Esophagus muscularis mucosa (tissue), 4 donors: ENCODE measurements at regions of chr19 and their contacts with region 1.

Region 1: DNA sequence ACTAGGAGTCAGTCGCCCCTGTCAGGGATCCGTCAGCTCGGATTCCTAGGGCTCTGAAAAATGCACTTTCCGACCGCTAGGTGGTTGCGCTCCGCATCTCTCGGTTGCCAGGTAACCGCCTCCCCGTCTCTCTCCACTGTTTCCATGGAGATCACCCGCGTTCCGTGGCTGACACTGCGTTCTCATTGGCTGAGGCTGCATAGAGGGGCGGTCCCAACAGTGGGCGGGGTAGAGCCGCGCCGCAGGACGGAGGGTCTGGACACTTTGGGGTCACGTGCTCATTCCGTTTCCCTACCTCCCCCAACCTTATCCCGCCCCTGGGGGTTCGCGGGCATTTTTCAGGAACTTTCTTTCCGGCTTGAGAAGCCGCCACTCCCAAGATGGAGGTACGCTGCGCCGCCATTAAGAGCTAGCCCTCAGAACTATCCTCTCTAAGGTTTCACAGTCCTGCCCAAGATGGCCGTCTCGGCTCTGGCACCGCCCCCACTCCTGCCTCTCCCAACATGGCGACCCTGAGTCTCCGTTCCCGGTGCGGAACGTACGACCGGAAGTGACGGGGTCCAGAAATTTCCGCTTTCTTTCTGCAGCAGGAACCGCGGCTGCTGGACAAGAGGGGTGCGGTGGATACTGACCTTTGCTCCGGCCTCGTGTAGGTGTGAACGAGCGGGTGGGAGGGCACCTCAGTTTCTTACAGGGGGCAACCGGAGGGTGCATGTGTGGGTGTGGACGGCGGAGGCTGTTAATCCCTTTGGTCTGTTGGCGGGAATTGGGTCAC is at the starts of genes ODAD3 and PRKCSH:
- DNase-seq: peak; percentile 99
- H3K4me3 ChIP-seq: peak within 1 kb of the TSS; percentile 70 to 90 (median 76)
- H3K27ac ChIP-seq: peak within 1 kb of the TSS; percentile 74 to 84 (median 80)
- H3K4me1 ChIP-seq: peaks cover 17 to 27% (median 20%) of the 10 kb centered on the region in 4 donors
- H3K27me3 ChIP-seq: no peaks in the 10 kb centered on the region
- CTCF ChIP-seq: peak; percentile 72 to 94 (median 94)
- EP300 ChIP-seq: no peak
- POLR2A ChIP-seq: no peak
- total RNA-seq, gene ODAD3: 0.39 to 0.83 TPM in 2 of 4 donors, not detected in the others
- total RNA-seq, gene PRKCSH: 81.0 to 141 (median 98.7) TPM

Region 2: GRCh38 chr19:11367528-11367927 is 67.7 kb before region 1 on chr19:
- intact Hi-C with region 1: no loop called
- DNase-seq: no peak
- H3K4me3 ChIP-seq: no peak overlapping the region
- H3K27ac ChIP-seq: no peak overlapping the region
- H3K4me1 ChIP-seq: peaks cover 0 to 10% (median 0%) of the 10 kb centered on the region in 4 donors
- H3K27me3 ChIP-seq: no peaks in the 10 kb centered on the region
- CTCF ChIP-seq: no peak
- EP300 ChIP-seq: no peak
- POLR2A ChIP-seq: no peak

Region 3: DNA sequence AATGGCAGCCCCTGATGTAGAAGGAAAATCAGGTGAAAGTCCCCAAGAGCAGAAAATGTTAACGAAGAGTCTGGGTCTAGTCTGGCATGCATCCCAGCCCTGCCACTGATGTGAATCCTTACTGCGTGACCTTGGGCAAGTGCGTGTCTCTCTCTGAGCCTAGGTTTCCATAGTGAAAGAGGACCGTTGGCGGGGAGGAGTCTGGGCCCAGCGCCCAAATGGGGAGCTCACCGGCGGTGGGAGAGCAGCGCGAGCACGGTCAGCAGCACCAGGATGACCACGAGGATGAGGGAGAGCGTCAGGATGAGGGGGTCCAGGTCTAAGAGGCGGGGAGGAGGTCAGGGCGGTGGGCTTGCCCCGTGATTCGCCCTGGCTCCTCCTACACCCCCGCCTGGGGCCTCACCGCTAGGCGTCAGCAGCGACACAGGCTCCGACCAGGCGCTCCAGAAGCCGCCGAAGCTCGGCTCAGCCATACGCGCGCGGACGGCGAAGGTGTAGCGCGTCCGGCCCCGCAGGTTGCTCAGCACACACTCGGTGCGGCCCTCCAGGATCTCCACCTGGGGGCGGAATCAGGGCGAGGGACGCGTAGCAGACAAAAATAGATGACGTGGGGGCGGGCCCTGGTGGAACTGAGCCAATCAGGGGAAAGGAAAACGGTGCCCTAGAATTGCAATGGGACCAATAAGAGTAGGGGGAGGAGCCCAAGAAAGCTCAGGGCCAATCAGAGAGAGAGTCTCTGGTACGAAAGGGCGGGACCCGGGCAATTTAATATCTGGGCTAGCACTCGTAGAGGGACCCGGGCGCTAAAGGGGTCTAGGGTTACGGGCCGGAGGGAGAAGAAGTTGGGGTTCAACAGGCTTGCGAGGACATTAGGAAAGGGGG is 54.4 kb before region 1 on chr19:
- intact Hi-C with region 1: loop called (anchors 5 kb)
- DNase-seq: peak; percentile 99
- H3K4me3 ChIP-seq: peak overlapping the region; percentile 60 to 78 (median 64)
- H3K27ac ChIP-seq: peak overlapping the region; percentile 79 to 86 (median 82)
- H3K4me1 ChIP-seq: peaks cover 46 to 71% (median 68%) of the 10 kb centered on the region in 4 donors
- H3K27me3 ChIP-seq: peaks cover 0 to 30% (median 23%) of the 10 kb centered on the region in 4 donors
- CTCF ChIP-seq: peak; percentile 60 to 79 (median 78)
- EP300 ChIP-seq: no peak
- POLR2A ChIP-seq: peak; percentile 39

Region 4: GRCh38 chr19:11505032-11505503 is 69.8 kb after region 1 on chr19:
- intact Hi-C with region 1: loop called (anchors 10 kb)
- DNase-seq: peak; percentile 99
- H3K4me3 ChIP-seq: peak overlapping the region; percentile 93 to 100 (median 98)
- H3K27ac ChIP-seq: peak overlapping the region; percentile 94 to 99 (median 98)
- H3K4me1 ChIP-seq: peaks cover 6 to 21% (median 14%) of the 10 kb centered on the region in 4 donors
- H3K27me3 ChIP-seq: no peaks in the 10 kb centered on the region
- CTCF ChIP-seq: peak in 1 of 3 experiments; percentile 10
- EP300 ChIP-seq: no peak
- POLR2A ChIP-seq: no peak

Region 5: GRCh38 chr19:11587302-11587974 is 152.2 kb after region 1 on chr19:
- intact Hi-C with region 1: no loop called
- DNase-seq: peak; percentile 93
- H3K4me3 ChIP-seq: no peak overlapping the region
- H3K27ac ChIP-seq: no peak overlapping the region
- H3K4me1 ChIP-seq: peaks cover 0 to 5% (median 2%) of the 10 kb centered on the region in 4 donors
- H3K27me3 ChIP-seq: no peaks in the 10 kb centered on the region
- CTCF ChIP-seq: peak; percentile 82 to 97 (median 91)
- EP300 ChIP-seq: no peak
- POLR2A ChIP-seq: no peak